ENCODE measurements at regions of chr18 and their contacts with region 1.

Region 1: GRCh38 chr18:9474983-9475642 is at the start of gene RALBP1:
- DNase-seq: peak; percentile 99
- H3K4me3 ChIP-seq: peak within 1 kb of the TSS; percentile 99
- H3K27ac ChIP-seq: peak within 1 kb of the TSS; percentile 85
- H3K4me1 ChIP-seq: peaks cover 30% of the 10 kb centered on the region
- CTCF ChIP-seq: 0 out of 2 replicates have a peak, but pooled peaks have one; percentile 23
- total RNA-seq, gene RALBP1: 78.5 and 80.2 TPM in 2 replicates

Region 2: DNA sequence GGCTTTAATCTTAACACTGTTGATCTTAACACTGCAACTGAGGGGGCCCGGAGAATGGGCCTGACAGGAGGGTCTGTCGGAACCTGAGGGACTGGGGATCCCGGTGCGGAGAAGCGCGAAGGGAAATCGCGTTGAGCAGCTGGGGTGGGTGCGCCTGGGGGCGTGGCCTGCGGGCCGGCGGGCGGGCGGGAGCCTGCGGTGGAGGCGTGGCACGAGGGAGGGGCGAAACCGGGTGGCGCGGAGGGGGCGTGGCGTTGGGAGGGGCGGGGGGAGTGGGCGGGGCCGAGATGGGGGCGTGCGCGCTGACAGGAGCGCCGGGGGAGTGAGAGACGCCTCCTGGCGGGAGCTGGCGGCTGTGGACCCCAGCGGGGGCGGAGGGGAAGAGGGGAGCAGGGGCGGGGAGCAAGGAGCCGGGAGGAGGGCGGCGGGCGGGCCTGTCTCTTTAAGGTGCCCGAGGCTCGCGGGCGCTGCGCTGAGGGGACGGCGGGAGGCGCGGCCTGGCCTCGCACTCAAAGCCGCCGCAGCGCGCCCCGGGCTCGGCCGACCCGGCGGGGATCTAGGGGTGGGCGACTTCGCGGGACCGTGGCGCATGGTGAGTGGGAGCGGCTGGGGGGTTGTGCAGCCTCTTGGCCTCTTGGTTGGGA is 140.7 kb before region 1 on chr18 and contains the start of gene TWSG1:
- CTCF ChIA-PET with region 1: no interaction called
- POLR2A ChIA-PET with region 1: no interaction called
- intact Hi-C with region 1: loop called (anchors 1 kb)
- DNase-seq: peak; percentile 96
- H3K4me3 ChIP-seq: peak within 1 kb of the TSS; percentile 96
- H3K27ac ChIP-seq: no peak within 1 kb of the TSS
- H3K4me1 ChIP-seq: peaks cover 8% of the 10 kb centered on the region
- CTCF ChIP-seq: peak; percentile 32; the same call in 1 of the 2 replicates
- total RNA-seq, gene TWSG1: 7.4 and 7.5 TPM in 2 replicates

Region 3: DNA sequence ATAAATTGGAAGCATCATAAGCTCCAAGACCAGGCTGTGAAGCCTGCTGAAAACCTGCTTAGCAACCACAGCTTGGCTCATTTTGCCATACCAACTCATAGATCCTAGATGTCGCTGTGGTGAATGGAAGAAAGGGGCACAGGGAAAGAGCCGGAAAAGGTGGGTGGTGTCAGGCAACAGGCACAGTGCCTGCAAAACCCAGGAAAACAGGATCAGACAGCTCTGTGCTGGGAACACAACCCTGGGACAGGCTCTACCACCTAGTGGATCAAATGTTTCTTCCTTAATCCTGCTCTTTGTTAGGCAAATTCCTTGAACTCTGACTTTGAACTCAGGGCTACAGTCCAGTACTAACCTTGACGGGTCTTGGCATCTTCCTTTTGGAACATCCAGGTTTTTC is 108.9 kb before region 1 on chr18:
- CTCF ChIA-PET with region 1: no interaction called
- POLR2A ChIA-PET with region 1: no interaction called
- intact Hi-C with region 1: no loop called
- DNase-seq: no peak
- H3K4me3 ChIP-seq: no peak overlapping the region
- H3K27ac ChIP-seq: no peak overlapping the region
- H3K4me1 ChIP-seq: no peaks in the 10 kb centered on the region
- CTCF ChIP-seq: no peak

Region 4: DNA sequence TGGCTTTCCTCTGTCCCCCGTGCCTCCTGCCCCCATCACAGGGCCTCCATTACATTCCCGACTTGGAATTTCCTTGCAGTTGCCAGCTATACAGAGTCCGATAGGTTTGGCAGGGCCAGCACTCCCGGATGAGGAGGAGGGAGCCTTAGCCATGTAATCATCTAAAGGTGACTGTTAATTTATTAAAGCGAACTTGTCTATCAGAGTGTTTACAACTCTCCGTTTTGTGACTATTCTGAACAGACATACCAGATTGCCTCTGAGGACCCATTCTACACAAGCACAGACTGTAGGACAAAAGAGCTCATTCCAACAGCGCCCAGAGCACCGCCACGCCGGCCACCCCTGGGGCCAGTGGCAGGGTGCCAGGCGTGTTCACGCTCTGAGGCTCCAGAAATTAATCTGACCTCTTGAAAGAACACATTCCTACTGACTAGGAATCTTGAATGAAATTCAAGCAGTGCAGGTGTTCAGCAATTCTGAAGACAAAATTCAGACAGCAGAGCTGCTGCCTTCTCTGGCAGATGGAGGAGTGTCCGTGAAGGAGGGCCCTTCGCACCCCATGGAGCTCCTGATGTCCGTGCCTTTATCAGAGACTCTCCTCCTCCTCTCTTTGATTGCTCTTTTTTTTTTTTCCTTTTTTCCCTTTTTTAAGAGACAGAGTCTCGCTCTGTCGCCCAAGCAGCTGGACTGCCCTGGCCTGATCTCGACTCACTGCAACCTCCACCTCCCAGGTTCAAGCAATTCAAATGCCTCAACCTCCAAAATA is 57.9 kb before region 1 on chr18:
- CTCF ChIA-PET with region 1: no interaction called
- POLR2A ChIA-PET with region 1: no interaction called
- intact Hi-C with region 1: no loop called
- DNase-seq: no peak
- H3K4me3 ChIP-seq: no peak overlapping the region
- H3K27ac ChIP-seq: no peak overlapping the region
- H3K4me1 ChIP-seq: no peaks in the 10 kb centered on the region
- CTCF ChIP-seq: no peak

Region 5: GRCh38 chr18:9535382-9535991 is 60.4 kb after region 1 on chr18:
- CTCF ChIA-PET with region 1: no interaction called
- POLR2A ChIA-PET with region 1: no interaction called
- intact Hi-C with region 1: no loop called
- DNase-seq: no peak
- H3K4me3 ChIP-seq: no peak overlapping the region
- H3K27ac ChIP-seq: no peak overlapping the region
- H3K4me1 ChIP-seq: no peaks in the 10 kb centered on the region
- CTCF ChIP-seq: no peak

Region 6: GRCh38 chr18:9661564-9661963 is 186.5 kb after region 1 on chr18:
- CTCF ChIA-PET with region 1: no interaction called
- POLR2A ChIA-PET with region 1: no interaction called
- intact Hi-C with region 1: no loop called
- DNase-seq: no peak
- H3K4me3 ChIP-seq: no peak overlapping the region
- H3K27ac ChIP-seq: no peak overlapping the region
- H3K4me1 ChIP-seq: no peaks in the 10 kb centered on the region
- CTCF ChIP-seq: no peak